ENCODE measurements at regions of chr1 and their contacts with region 1.

Region 1: GRCh38 chr1:160681067-160681890 is 30.3 kb downstream of the CD48 start:
- DNase-seq: peak; percentile 82 to 88 (median 85)
- H3K4me3 ChIP-seq: no peak overlapping the region
- H3K4me3 Mint-ChIP-seq: peak overlapping the region in 5 of 8 donors; percentile 15 to 58 (median 26)
- H3K27ac ChIP-seq: peak overlapping the region; percentile 55
- H3K27ac Mint-ChIP-seq: peak overlapping the region; percentile 67 to 97 (median 91)
- H3K4me1 ChIP-seq: peaks cover 55% of the 10 kb centered on the region
- H3K4me1 Mint-ChIP-seq: peaks cover 49 to 69% (median 53%) of the 10 kb centered on the region in 4 donors
- H3K27me3 ChIP-seq: no peaks in the 10 kb centered on the region
- H3K27me3 Mint-ChIP-seq: no peaks in the 10 kb centered on the region

Region 2: GRCh38 chr1:160618763-160619274 is 62.5 kb before region 1 on chr1:
- CTCF ChIA-PET with region 1: interaction called, 139 read pairs
- POLR2A ChIA-PET with region 1: interaction called, 48 read pairs
- intact Hi-C with region 1: no loop called
- DNase-seq: peak; percentile 52 to 58 (median 55)
- H3K4me3 ChIP-seq: no peak overlapping the region
- H3K4me3 Mint-ChIP-seq: peak overlapping the region in 5 of 8 donors; percentile 4 to 41 (median 23)
- H3K27ac ChIP-seq: no peak overlapping the region
- H3K27ac Mint-ChIP-seq: peak overlapping the region; percentile 61 to 94 (median 84)
- H3K4me1 ChIP-seq: peaks cover 86% of the 10 kb centered on the region
- H3K4me1 Mint-ChIP-seq: peaks cover 53 to 86% (median 69%) of the 10 kb centered on the region in 4 donors
- H3K27me3 ChIP-seq: no peaks in the 10 kb centered on the region
- H3K27me3 Mint-ChIP-seq: no peaks in the 10 kb centered on the region

Region 3: GRCh38 chr1:160664573-160665051 is 16.7 kb before region 1 on chr1:
- CTCF ChIA-PET with region 1: interaction called, 40 read pairs
- POLR2A ChIA-PET with region 1: interaction called, 9 read pairs
- intact Hi-C with region 1: no loop called
- DNase-seq: peak; percentile 63 to 76 (median 74)
- H3K4me3 ChIP-seq: peak overlapping the region in 1 of 2 donors; percentile 29
- H3K4me3 Mint-ChIP-seq: peak overlapping the region; percentile 60 to 85 (median 74)
- H3K27ac ChIP-seq: peak overlapping the region; percentile 62
- H3K27ac Mint-ChIP-seq: peak overlapping the region; percentile 79 to 97 (median 90)
- H3K4me1 ChIP-seq: peaks cover 73% of the 10 kb centered on the region
- H3K4me1 Mint-ChIP-seq: peaks cover 57 to 74% (median 64%) of the 10 kb centered on the region in 4 donors
- H3K27me3 ChIP-seq: no peaks in the 10 kb centered on the region
- H3K27me3 Mint-ChIP-seq: no peaks in the 10 kb centered on the region

Region 4: DNA sequence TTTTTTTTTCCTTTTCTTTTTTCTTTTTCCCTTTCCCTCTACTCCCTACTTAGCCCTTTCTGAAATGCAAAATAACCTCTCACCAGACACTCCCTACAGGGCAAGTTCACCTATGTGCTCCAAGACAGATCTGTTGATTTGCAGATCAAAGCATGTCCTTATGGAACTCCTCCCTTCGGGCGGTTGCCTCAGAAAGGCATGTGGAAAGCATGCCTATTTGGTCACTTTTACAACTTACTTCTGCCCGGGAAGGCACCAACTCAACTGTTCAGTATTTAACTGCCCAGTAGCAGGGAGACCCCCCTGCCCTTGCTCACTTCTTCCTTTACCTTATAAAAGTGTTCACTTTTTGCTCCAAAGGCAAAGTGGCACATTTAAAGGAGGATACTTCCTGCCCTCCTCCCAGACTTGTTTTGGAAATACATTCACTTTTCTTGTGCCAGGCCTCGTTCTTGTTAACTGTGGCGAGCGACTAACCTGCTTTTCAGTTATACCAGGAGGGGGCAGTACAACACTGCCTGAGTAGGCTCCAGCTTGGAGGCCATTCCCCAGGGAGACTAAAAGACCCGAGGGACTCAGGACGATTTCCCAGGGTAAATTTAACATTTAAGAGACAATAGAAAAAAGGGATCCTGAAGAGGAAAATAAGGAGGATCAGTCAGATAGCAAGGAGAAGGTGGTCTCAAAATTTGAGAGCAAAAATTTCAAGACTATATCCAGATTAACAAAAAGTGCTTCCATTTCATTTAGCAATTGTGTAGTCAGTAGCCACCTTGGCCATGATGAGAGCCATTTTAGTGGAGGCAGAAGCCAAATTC is 45.4 kb after region 1 on chr1:
- CTCF ChIA-PET with region 1: interaction called, 108 read pairs
- POLR2A ChIA-PET with region 1: interaction called, 5 read pairs
- intact Hi-C with region 1: loop called (anchors 1 kb)
- DNase-seq: peak; percentile 67 to 76 (median 74)
- H3K4me3 ChIP-seq: no peak overlapping the region
- H3K4me3 Mint-ChIP-seq: no peak overlapping the region
- H3K27ac ChIP-seq: no peak overlapping the region
- H3K27ac Mint-ChIP-seq: no peak overlapping the region
- H3K4me1 ChIP-seq: peaks cover 24% of the 10 kb centered on the region
- H3K4me1 Mint-ChIP-seq: peaks cover 11 to 20% (median 15%) of the 10 kb centered on the region in 4 donors
- H3K27me3 ChIP-seq: no peaks in the 10 kb centered on the region
- H3K27me3 Mint-ChIP-seq: no peaks in the 10 kb centered on the region

Region 5: DNA sequence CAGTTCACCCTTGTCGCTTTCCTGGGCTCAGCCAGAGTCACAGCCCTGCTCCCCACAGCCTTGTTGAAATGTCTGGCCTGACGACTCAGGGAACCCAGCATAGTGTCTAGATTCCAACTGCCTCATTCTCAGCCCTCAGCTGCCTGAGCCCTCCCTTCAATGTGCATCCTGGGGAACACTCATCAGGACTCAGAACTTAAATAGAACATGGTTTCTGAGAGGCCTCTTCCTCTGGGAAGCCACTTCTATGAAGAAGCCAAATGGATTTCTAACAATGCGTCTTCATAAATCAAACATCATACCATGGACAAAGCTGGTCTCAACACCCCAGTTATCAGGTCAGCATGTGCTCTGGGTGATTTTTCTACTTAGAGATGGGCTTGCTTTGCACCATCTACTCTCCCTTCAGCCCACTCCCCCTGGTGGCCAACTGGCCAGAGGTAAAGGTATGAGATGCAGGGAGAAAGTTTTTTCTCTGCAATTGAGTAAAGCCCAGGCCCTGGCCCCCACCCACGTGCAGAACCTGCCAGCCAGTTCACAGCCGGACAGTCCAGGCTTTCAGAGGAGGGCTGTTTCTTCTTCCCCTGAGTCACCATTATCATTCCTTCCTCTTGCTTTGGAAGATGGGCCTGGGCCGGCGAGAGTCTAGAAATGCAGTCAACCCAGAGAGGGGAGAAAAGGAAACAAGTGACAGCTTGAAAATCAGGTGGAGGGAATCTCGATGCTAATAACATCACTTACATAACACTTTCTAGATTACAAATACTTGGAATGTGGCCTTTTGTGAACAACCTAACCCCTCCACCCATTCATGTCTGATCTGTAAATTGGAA is 149.3 kb after region 1 on chr1:
- CTCF ChIA-PET with region 1: interaction called, 58 read pairs
- POLR2A ChIA-PET with region 1: no interaction called
- intact Hi-C with region 1: loop called (anchors 1 kb)
- DNase-seq: peak; percentile 62 to 75 (median 70)
- H3K4me3 ChIP-seq: no peak overlapping the region
- H3K4me3 Mint-ChIP-seq: no peak overlapping the region
- H3K27ac ChIP-seq: no peak overlapping the region
- H3K27ac Mint-ChIP-seq: peak overlapping the region in 6 of 7 donors; percentile 74 to 86 (median 82)
- H3K4me1 ChIP-seq: peaks cover 6% of the 10 kb centered on the region
- H3K4me1 Mint-ChIP-seq: peaks cover 13 to 35% (median 24%) of the 10 kb centered on the region in 4 donors
- H3K27me3 ChIP-seq: no peaks in the 10 kb centered on the region
- H3K27me3 Mint-ChIP-seq: no peaks in the 10 kb centered on the region

Region 6: DNA sequence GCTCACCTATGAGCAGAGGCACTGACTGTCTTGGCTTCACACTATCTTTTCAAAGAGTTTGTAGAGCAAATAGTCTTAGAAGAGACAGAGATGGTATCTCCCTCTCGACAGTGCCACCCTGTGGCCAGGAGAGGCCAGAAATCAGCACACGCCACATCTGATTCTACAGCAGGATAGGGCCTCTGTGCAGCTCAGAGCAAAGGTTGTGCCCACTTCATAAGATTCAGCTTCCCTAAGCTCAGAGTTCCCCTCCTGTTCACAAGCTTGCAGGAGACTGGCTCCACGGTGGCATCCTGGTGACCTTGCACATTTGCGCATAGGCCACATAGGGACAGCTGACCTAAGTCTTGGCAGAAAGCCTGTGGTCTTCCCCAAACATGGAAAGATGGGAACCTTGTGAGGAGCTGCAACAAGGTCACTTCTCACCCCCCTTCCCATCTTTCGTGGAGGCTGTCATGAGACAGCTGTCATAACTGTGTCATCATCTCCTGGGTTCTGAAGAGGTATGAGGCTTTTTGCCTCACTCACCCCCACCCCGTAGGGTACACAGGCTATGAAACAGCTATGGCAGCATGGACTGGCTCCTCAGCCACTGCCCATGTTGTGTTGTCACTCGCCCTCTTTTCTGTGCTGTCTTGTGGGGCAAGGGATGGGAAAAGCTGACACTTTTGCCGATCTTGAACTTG is 270.3 kb after region 1 on chr1:
- CTCF ChIA-PET with region 1: interaction called, 35 read pairs
- POLR2A ChIA-PET with region 1: interaction called, 3 read pairs
- intact Hi-C with region 1: loop called (anchors 1 kb)
- DNase-seq: peak; percentile 52 to 70 (median 65)
- H3K4me3 ChIP-seq: no peak overlapping the region
- H3K4me3 Mint-ChIP-seq: no peak overlapping the region
- H3K27ac ChIP-seq: no peak overlapping the region
- H3K27ac Mint-ChIP-seq: no peak overlapping the region
- H3K4me1 ChIP-seq: no peaks in the 10 kb centered on the region
- H3K4me1 Mint-ChIP-seq: peaks cover 6 to 13% (median 7%) of the 10 kb centered on the region in 4 donors
- H3K27me3 ChIP-seq: no peaks in the 10 kb centered on the region
- H3K27me3 Mint-ChIP-seq: no peaks in the 10 kb centered on the region

Region 7: GRCh38 chr1:161139765-161140164 is 458.5 kb after region 1 on chr1:
- CTCF ChIA-PET with region 1: no interaction called
- POLR2A ChIA-PET with region 1: no interaction called
- intact Hi-C with region 1: no loop called
- DNase-seq: peak; percentile 41 to 54 (median 51)
- H3K4me3 ChIP-seq: no peak overlapping the region
- H3K4me3 Mint-ChIP-seq: no peak overlapping the region
- H3K27ac ChIP-seq: no peak overlapping the region
- H3K27ac Mint-ChIP-seq: no peak overlapping the region
- H3K4me1 ChIP-seq: no peaks in the 10 kb centered on the region
- H3K4me1 Mint-ChIP-seq: peaks cover 0 to 4% (median 2%) of the 10 kb centered on the region in 4 donors
- H3K27me3 ChIP-seq: no peaks in the 10 kb centered on the region
- H3K27me3 Mint-ChIP-seq: no peaks in the 10 kb centered on the region